Natural killer cell (primary cell): ENCODE measurements at regions of chr3 and their contacts with region 1.

Region 1: DNA sequence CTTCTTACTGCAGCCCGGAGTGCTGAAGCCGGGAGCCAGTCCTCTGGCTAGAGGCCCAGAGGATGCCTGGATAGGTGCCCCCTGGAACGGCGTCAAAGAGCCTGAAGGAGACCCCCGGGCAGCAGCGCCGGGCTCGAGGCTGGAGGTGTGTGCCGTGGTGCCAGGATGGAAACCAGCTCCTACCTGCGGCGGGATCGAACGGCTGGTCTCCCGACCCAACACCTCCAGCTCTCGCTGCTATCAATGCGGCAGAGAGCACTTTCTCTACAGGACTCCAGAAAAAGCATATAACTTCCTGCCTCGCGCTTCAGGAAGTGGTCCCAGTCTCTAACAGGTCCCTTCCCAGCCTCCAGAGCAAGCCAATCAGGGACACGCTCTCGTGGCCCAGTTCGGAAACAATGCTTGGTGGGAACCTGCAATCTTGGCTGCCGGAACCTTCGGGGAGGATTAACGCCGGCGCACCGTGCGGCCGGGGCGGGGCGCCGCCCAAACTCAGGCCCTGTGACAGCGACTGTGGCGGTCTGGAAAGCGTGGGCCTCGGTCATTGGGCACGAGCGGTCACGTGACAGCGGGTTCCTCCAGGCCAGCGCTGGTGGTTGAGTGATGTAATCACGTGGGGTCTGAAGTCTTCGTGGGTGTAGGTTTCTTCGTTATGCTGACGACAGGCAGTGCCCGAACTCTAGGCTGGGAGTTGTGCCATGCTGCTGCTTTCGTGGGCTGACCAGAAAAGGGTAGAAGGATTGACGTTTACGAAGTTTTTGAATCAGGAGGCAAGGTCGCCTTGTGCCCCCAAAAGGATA is at the start of gene SLC33A1:
- DNase-seq: peak; percentile 99 to 100
- ATAC-seq: peak; percentile 87 to 98 (median 88)
- H3K4me3 ChIP-seq: peak within 1 kb of the TSS; percentile 87
- H3K4me3 Mint-ChIP-seq: peak within 1 kb of the TSS; percentile 88
- H3K27ac ChIP-seq: peak within 1 kb of the TSS; percentile 97
- H3K27ac Mint-ChIP-seq: peak within 1 kb of the TSS; percentile 98
- H3K4me1 ChIP-seq: peaks cover 36% of the 10 kb centered on the region
- H3K4me1 Mint-ChIP-seq: peaks cover 42 to 46% of the 10 kb centered on the region in 2 donors
- H3K27me3 ChIP-seq: no peaks in the 10 kb centered on the region
- H3K27me3 Mint-ChIP-seq: no peaks in the 10 kb centered on the region
- CTCF ChIP-seq: no peak
- total RNA-seq, gene SLC33A1: 25.2 to 28.4 (median 27.2) TPM

Region 2: DNA sequence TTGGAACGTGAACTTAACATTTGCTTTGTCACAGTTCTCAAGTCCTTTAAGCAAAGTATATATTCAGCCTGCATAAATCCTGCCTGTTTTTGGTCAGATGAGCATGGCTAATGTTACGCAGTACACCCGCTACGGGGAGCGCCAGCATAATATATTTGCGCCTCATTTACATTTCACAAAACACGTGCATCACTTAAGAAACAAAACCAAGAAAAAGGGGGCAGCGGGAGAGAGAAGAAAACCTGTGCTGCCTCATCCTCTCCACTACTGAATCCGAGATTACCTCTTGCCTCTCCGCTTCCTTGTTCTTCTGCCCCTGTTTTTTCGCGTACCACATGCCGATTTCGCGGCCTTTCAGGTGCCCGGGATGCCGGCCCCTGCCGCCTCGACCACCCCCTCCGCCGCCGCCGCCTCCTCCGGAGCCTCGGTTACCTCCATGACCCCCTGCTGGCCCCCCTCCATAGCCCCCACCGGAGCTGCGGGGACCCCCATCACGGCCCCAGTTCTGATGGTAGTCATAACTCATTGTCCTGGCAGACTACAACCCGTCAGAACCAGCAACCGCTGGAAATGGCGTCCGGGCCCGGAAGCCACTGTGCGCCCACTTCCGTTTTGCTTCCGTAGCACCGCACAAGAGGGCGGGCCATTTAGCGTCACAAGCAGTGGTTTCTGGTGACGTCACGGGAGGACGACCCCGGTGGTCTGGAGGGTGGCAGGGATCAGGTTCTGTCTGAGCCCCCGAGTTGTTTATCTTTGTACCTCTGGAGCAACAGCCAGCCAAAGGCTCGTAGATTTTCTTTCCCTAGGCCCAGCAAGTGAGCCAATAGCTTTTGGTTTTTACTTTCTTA is 1530.2 kb before region 1 on chr3 and contains the start of gene DHX36:
- intact Hi-C with region 1: loop called (anchors 2 kb)
- DNase-seq: peak; percentile 88 to 96
- ATAC-seq: peak; percentile 85 to 94 (median 90)
- H3K4me3 ChIP-seq: peak within 1 kb of the TSS; percentile 81
- H3K4me3 Mint-ChIP-seq: peak within 1 kb of the TSS; percentile 94
- H3K27ac ChIP-seq: peak within 1 kb of the TSS; percentile 99
- H3K27ac Mint-ChIP-seq: no peak within 1 kb of the TSS
- H3K4me1 ChIP-seq: peaks cover 12% of the 10 kb centered on the region
- H3K4me1 Mint-ChIP-seq: peaks cover 18 to 23% of the 10 kb centered on the region in 2 donors
- H3K27me3 ChIP-seq: no peaks in the 10 kb centered on the region
- H3K27me3 Mint-ChIP-seq: peaks cover 0 to 11% of the 10 kb centered on the region in 2 donors
- CTCF ChIP-seq: no peak
- total RNA-seq, gene DHX36: 97.3 to 111 (median 102) TPM

Region 3: GRCh38 chr3:155605571-155605970 is 248.8 kb before region 1 on chr3:
- intact Hi-C with region 1: no loop called
- DNase-seq: no peak
- ATAC-seq: no peak
- H3K4me3 ChIP-seq: no peak overlapping the region
- H3K4me3 Mint-ChIP-seq: no peak overlapping the region
- H3K27ac ChIP-seq: no peak overlapping the region
- H3K27ac Mint-ChIP-seq: no peak overlapping the region
- H3K4me1 ChIP-seq: no peaks in the 10 kb centered on the region
- H3K4me1 Mint-ChIP-seq: peaks cover 8 to 14% of the 10 kb centered on the region in 2 donors
- H3K27me3 ChIP-seq: no peaks in the 10 kb centered on the region
- H3K27me3 Mint-ChIP-seq: no peaks in the 10 kb centered on the region
- CTCF ChIP-seq: no peak

Region 4: DNA sequence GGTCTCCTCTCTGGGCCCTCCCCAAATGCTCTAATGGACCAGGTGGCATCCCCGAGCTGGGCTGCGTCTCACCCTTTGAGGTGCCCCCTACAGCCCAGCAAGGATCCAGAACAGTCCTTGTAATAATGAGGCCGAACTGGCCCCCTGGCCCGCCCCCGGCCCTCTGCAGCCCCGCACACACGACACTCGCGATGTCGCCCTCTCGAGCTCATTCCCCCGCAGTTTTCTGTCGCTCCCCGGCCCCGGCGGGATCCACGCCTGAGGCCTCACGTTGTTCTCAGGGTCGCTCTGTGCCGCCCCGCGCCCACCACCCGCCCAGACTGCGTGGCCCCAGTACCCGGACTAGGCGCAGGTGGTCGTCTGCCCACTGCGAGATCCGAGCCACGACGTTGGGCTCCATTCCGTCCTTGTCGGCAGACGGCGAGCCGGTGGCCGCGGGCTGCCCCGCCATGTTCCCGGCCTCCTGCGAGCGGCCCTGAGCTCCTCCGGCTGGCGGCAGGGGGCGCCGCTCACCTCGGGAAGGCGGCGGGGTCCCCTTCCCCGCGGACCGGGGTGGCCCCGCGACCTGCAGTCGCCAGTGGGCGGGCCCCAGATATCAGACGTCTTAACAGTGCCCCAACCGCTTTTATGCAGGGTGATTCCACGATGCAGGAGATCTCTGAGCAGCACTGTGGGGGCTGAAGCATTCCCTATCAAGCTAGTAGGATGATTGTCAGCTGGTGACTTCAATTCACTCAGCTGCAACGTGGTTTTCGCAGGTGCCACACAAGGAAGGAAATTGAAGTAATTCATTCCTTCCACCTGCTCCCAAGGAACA is 48.3 kb before region 1 on chr3 and contains the start of gene C3orf33:
- intact Hi-C with region 1: loop called (anchors 1 kb)
- DNase-seq: peak; percentile 74 to 88
- ATAC-seq: peak; percentile 96 to 97 (median 96)
- H3K4me3 ChIP-seq: peak within 1 kb of the TSS; percentile 59
- H3K4me3 Mint-ChIP-seq: peak within 1 kb of the TSS; percentile 86
- H3K27ac ChIP-seq: peak within 1 kb of the TSS; percentile 52
- H3K27ac Mint-ChIP-seq: peak within 1 kb of the TSS; percentile 27 to 91
- H3K4me1 ChIP-seq: peaks cover 14% of the 10 kb centered on the region
- H3K4me1 Mint-ChIP-seq: peaks cover 10 to 19% of the 10 kb centered on the region in 2 donors
- H3K27me3 ChIP-seq: no peaks in the 10 kb centered on the region
- H3K27me3 Mint-ChIP-seq: peaks cover 8 to 10% of the 10 kb centered on the region in 2 donors
- CTCF ChIP-seq: peak; percentile 91
- total RNA-seq, gene C3orf33: 0.88 to 2.5 (median 1.2) TPM

Region 5: GRCh38 chr3:155870133-155870944 is 16.0 kb after region 1 on chr3 and contains the start of gene GMPS:
- intact Hi-C with region 1: loop called (anchors 1 kb)
- DNase-seq: peak; percentile 96 to 97
- ATAC-seq: peak; percentile 90 to 98 (median 92)
- H3K4me3 ChIP-seq: peak within 1 kb of the TSS; percentile 92
- H3K4me3 Mint-ChIP-seq: peak within 1 kb of the TSS; percentile 95
- H3K27ac ChIP-seq: peak within 1 kb of the TSS; percentile 95
- H3K27ac Mint-ChIP-seq: peak within 1 kb of the TSS; percentile 90 to 96
- H3K4me1 ChIP-seq: peaks cover 9% of the 10 kb centered on the region
- H3K4me1 Mint-ChIP-seq: peaks cover 18 to 20% of the 10 kb centered on the region in 2 donors
- H3K27me3 ChIP-seq: no peaks in the 10 kb centered on the region
- H3K27me3 Mint-ChIP-seq: no peaks in the 10 kb centered on the region
- CTCF ChIP-seq: peak; percentile 43
- total RNA-seq, gene GMPS: 36.7 to 49.7 (median 45.4) TPM

Region 6: GRCh38 chr3:157174649-157175498 is 1320.5 kb after region 1 on chr3:
- intact Hi-C with region 1: loop called (anchors 5 kb)
- DNase-seq: peak; percentile 94 to 100
- ATAC-seq: peak; percentile 93 to 98 (median 93)
- H3K4me3 ChIP-seq: peak overlapping the region; percentile 64
- H3K4me3 Mint-ChIP-seq: peak overlapping the region; percentile 94
- H3K27ac ChIP-seq: peak overlapping the region; percentile 93
- H3K27ac Mint-ChIP-seq: peak overlapping the region; percentile 94 to 100
- H3K4me1 ChIP-seq: peaks cover 14% of the 10 kb centered on the region
- H3K4me1 Mint-ChIP-seq: peaks cover 21% of the 10 kb centered on the region in 2 donors
- H3K27me3 ChIP-seq: no peaks in the 10 kb centered on the region
- H3K27me3 Mint-ChIP-seq: peaks cover 9 to 10% of the 10 kb centered on the region in 2 donors
- CTCF ChIP-seq: no peak